ENCODE measurements at regions of chr17 and their contacts with region 1.

Region 1: DNA sequence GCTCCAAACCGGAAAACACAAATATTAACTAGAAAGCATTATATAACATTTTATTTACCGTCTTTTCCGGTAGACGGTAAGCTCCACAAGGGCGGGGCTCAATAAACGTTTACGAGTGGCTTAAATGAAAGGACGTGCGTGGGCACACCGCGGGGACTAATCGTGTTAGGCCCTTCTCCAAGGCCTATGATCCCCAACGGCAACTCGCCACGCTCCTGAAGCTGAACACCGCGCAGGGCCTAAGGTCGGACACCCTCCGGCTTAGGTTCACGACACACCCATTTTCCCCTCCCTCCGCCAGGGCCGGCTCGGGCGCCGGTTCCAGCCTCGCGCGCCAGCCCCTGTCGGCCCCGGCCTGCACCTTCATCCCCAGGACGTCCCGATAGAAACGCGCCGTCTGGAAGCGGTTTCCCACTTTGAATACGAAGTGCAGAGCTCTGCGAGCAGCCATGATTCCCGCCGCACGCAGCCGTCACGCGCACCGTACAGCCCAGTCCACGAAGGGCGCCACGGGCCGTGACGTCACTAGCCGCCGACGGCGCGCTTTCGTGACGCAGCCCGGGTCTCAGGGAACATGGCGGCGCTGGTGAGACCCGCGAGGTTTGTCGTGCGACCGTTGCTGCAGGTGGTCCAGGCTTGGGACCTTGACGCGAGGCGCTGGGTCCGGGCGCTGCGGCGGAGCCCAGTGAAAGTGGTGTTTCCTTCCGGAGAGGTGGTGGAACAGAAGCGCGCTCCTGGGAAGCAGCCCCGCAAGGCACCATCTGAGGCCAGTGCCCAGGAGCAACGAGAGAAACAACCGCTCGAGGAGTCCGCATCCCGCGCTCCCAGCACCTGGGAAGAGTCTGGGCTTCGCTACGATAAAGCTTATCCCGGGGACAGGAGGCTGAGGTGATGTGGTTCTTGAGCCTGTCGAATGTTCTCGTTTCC is at the starts of genes GLOD4 and MRM3:
- DNase-seq: peak; percentile 95
- ATAC-seq: peak; percentile 96
- H3K4me3 Mint-ChIP-seq: peak within 1 kb of the TSS; percentile 97
- H3K27ac Mint-ChIP-seq: peak within 1 kb of the TSS; percentile 97
- H3K4me1 Mint-ChIP-seq: peaks cover 37% of the 10 kb centered on the region
- H3K27me3 Mint-ChIP-seq: no peaks in the 10 kb centered on the region
- total RNA-seq, gene GLOD4: 45.1 to 56.3 TPM
- total RNA-seq, gene MRM3: 21.7 to 26.5 TPM

Region 2: GRCh38 chr17:752002-752619 is 30.0 kb before region 1 on chr17 and contains the start of gene GEMIN4:
- CTCF ChIA-PET with region 1: interaction called, 10 read pairs
- DNase-seq: peak; percentile 96
- ATAC-seq: peak; percentile 88
- H3K4me3 Mint-ChIP-seq: peak within 1 kb of the TSS; percentile 89
- H3K27ac Mint-ChIP-seq: peak within 1 kb of the TSS; percentile 93
- H3K4me1 Mint-ChIP-seq: peaks cover 32% of the 10 kb centered on the region
- H3K27me3 Mint-ChIP-seq: no peaks in the 10 kb centered on the region
- total RNA-seq, gene GEMIN4: 40.8 to 43.0 TPM

Region 3: GRCh38 chr17:807523-808294 is 25.6 kb after region 1 on chr17:
- CTCF ChIA-PET with region 1: no interaction called
- DNase-seq: no peak
- ATAC-seq: no peak
- H3K4me3 Mint-ChIP-seq: no peak overlapping the region
- H3K27ac Mint-ChIP-seq: no peak overlapping the region
- H3K4me1 Mint-ChIP-seq: no peaks in the 10 kb centered on the region
- H3K27me3 Mint-ChIP-seq: no peaks in the 10 kb centered on the region